Activated naive CD4-positive, alpha-beta T cell treated with anti-CD3 and anti-CD28 coated beads for 36 hours (primary cell): ENCODE measurements at regions of chr13 and their contacts with region 1.

Region 1: GRCh38 chr13:27424246-27425157 is at the start of gene GTF3A:
- DNase-seq: peak; percentile 89
- H3K4me3 Mint-ChIP-seq: peak within 1 kb of the TSS; percentile 88
- H3K27ac Mint-ChIP-seq: peak within 1 kb of the TSS; percentile 91
- H3K4me1 Mint-ChIP-seq: peaks cover 30% of the 10 kb centered on the region
- H3K27me3 Mint-ChIP-seq: no peaks in the 10 kb centered on the region
- total RNA-seq, gene GTF3A: 303 to 314 TPM

Region 2: GRCh38 chr13:27130979-27131623 is 293.4 kb before region 1 on chr13:
- CTCF ChIA-PET with region 1: no interaction called
- intact Hi-C with region 1: loop called (anchors 2 kb)
- DNase-seq: peak; percentile 89
- H3K4me3 Mint-ChIP-seq: no peak overlapping the region
- H3K27ac Mint-ChIP-seq: peak overlapping the region; percentile 91
- H3K4me1 Mint-ChIP-seq: peaks cover 88% of the 10 kb centered on the region
- H3K27me3 Mint-ChIP-seq: no peaks in the 10 kb centered on the region

Region 3: GRCh38 chr13:27353166-27353583 is 71.3 kb before region 1 on chr13:
- CTCF ChIA-PET with region 1: no interaction called
- intact Hi-C with region 1: loop called (anchors 1 kb)
- DNase-seq: peak; percentile 68
- H3K4me3 Mint-ChIP-seq: no peak overlapping the region
- H3K27ac Mint-ChIP-seq: no peak overlapping the region
- H3K4me1 Mint-ChIP-seq: peaks cover 12% of the 10 kb centered on the region
- H3K27me3 Mint-ChIP-seq: peaks cover 9% of the 10 kb centered on the region

Region 4: DNA sequence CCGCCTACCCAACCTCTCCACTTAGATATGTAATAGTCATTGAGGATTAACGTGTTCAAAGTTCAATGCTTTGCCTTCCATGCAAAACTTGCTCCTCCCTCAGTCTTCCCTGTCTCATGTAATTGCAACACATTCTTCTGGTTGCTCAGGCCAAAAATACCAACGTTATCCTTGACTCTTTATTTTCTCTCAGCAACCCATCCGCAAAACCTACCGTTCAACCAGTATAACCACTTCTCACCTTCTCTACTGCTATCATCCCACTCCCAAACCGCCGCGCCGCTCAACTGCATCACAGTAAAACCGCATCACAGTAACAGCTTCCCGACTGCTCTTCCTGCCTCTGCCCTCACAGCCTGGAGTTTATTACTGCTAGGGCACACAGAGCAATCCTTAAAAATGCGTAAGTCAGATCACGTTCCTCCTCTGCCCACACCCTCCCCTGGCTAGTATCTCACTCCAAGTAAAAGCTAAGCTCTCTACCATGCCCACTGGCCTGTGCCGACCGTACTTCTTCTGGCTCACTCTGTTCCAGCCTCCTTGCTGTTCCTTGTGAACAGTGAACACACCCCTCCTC is 17.7 kb after region 1 on chr13:
- CTCF ChIA-PET with region 1: interaction called, 34 read pairs
- intact Hi-C with region 1: loop called (anchors 1 kb)
- DNase-seq: peak; percentile 62
- H3K4me3 Mint-ChIP-seq: peak overlapping the region; percentile 39
- H3K27ac Mint-ChIP-seq: peak overlapping the region; percentile 10
- H3K4me1 Mint-ChIP-seq: peaks cover 51% of the 10 kb centered on the region
- H3K27me3 Mint-ChIP-seq: no peaks in the 10 kb centered on the region

Region 5: GRCh38 chr13:27919934-27920676 is 495.6 kb after region 1 on chr13 and contains the start of gene PDX1:
- CTCF ChIA-PET with region 1: no interaction called
- intact Hi-C with region 1: loop called (anchors 5 kb)
- DNase-seq: no peak
- H3K4me3 Mint-ChIP-seq: peak within 1 kb of the TSS; percentile 68
- H3K27ac Mint-ChIP-seq: no peak within 1 kb of the TSS
- H3K4me1 Mint-ChIP-seq: peaks cover 39% of the 10 kb centered on the region
- H3K27me3 Mint-ChIP-seq: peaks cover 77% of the 10 kb centered on the region
- total RNA-seq, gene PDX1: not detected